RWPE1 (cell line): ENCODE measurements at regions of chr12 and their contacts with region 1.

Region 1: DNA sequence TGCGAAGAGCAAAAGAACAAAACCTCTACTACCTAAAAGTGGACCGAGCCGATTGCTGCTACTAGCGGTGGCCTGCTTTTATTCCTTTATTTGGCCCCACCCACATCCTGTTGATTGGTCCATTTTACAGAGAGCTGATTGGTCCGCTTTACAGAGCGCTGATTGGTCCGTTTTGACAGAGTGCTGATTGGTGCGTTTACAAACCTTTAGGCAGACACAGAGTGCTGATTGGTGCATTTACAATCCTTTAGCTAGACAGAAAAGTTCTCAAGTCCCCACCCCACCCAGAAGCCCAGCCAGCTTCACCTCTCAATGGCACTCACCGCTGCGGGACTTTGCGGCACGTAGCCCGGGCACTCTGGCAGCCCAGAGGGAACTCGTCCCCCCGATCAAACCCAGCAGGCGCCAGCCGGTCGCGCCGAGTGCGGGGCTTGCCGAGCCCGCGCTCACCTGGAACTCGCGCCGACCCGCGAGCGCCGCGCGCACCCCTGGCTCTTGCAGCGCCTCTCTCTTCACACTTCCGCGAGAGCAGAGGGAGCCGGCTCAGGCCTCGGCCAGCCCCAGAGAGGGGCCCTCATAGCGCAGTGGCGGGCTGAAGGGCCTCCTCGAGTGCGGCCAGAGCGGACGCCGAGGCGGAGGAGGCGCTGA is 8.7 kb upstream of the FGD4 start:
- DNase-seq: no peak
- H3K27ac ChIP-seq: peak overlapping the region; percentile 63
- CTCF ChIP-seq: no peak

Region 2: GRCh38 chr12:31772685-31773222 is 617.9 kb before region 1 on chr12:
- CTCF ChIA-PET with region 1: interaction called, 10 read pairs
- POLR2A ChIA-PET with region 1: no interaction called
- DNase-seq: no peak
- H3K27ac ChIP-seq: no peak overlapping the region
- CTCF ChIP-seq: no peak

Region 3: GRCh38 chr12:32659908-32660440 is 269.3 kb after region 1 on chr12:
- CTCF ChIA-PET with region 1: no interaction called
- POLR2A ChIA-PET with region 1: no interaction called
- DNase-seq: no peak
- H3K27ac ChIP-seq: no peak overlapping the region
- CTCF ChIP-seq: no peak